ENCODE measurements at regions of chr5 and their contacts with region 1.

Region 1: DNA sequence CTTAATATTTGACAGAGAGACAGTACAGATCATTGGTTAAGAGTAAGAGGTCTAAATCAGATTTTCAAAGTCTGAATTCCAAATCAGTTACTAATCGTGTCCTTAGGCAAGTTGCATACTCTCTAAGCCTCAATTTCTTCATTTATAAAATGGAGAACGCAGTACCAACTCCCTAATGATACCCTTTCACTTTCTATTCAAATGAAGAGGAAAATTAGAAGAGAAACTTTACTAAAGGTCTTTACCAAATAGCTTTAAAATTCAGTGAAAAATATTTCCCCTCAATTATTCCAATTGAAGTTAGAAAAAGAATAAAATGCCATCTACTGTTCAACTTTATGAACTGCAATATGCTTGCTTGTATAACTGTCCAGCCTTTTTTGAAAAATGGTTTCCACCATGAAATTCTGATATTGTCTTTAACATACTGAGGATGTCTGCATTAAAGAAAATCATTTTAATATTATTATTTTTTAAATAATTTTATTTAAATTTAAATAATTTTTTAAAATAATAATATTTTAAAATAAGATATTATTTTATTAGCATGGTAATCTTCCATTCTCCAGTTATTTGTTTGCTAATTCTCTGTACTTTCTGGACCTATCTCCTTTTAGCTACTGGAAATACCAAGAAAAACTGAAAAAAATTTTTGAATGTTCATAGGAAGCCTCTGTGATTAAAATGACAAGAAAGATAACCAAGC is 36.0 kb downstream of the POC5 start:
- DNase-seq: no peak
- ATAC-seq: peak; percentile 45
- H3K4me3 Mint-ChIP-seq: no peak overlapping the region
- H3K27ac Mint-ChIP-seq: no peak overlapping the region
- H3K4me1 Mint-ChIP-seq: no peaks in the 10 kb centered on the region
- H3K27me3 Mint-ChIP-seq: no peaks in the 10 kb centered on the region
- CTCF ChIP-seq: peak; percentile 82

Region 2: GRCh38 chr5:75053304-75054133 is 627.8 kb before region 1 on chr5:
- CTCF ChIA-PET with region 1: interaction called, 8 read pairs
- POLR2A ChIA-PET with region 1: no interaction called
- intact Hi-C with region 1: loop called (anchors 2 kb)
- DNase-seq: no peak
- ATAC-seq: no peak
- H3K4me3 Mint-ChIP-seq: peak overlapping the region; percentile 73
- H3K27ac Mint-ChIP-seq: no peak overlapping the region
- H3K4me1 Mint-ChIP-seq: peaks cover 10% of the 10 kb centered on the region
- H3K27me3 Mint-ChIP-seq: peaks cover 53% of the 10 kb centered on the region
- CTCF ChIP-seq: no peak

Region 3: GRCh38 chr5:75389430-75389829 is 291.8 kb before region 1 on chr5:
- CTCF ChIA-PET with region 1: no interaction called
- POLR2A ChIA-PET with region 1: no interaction called
- intact Hi-C with region 1: loop called (anchors 10 kb)
- DNase-seq: no peak
- ATAC-seq: no peak
- H3K4me3 Mint-ChIP-seq: no peak overlapping the region
- H3K27ac Mint-ChIP-seq: no peak overlapping the region
- H3K4me1 Mint-ChIP-seq: no peaks in the 10 kb centered on the region
- H3K27me3 Mint-ChIP-seq: no peaks in the 10 kb centered on the region
- CTCF ChIP-seq: no peak

Region 4: GRCh38 chr5:75640395-75640794 is 40.9 kb before region 1 on chr5:
- CTCF ChIA-PET with region 1: no interaction called
- POLR2A ChIA-PET with region 1: no interaction called
- intact Hi-C with region 1: no loop called
- DNase-seq: no peak
- ATAC-seq: no peak
- H3K4me3 Mint-ChIP-seq: no peak overlapping the region
- H3K27ac Mint-ChIP-seq: no peak overlapping the region
- H3K4me1 Mint-ChIP-seq: no peaks in the 10 kb centered on the region
- H3K27me3 Mint-ChIP-seq: no peaks in the 10 kb centered on the region
- CTCF ChIP-seq: no peak

Region 5: GRCh38 chr5:76223696-76224095 is 542.4 kb after region 1 on chr5:
- CTCF ChIA-PET with region 1: no interaction called
- POLR2A ChIA-PET with region 1: no interaction called
- intact Hi-C with region 1: no loop called
- DNase-seq: no peak
- ATAC-seq: no peak
- H3K4me3 Mint-ChIP-seq: no peak overlapping the region
- H3K27ac Mint-ChIP-seq: no peak overlapping the region
- H3K4me1 Mint-ChIP-seq: no peaks in the 10 kb centered on the region
- H3K27me3 Mint-ChIP-seq: peaks cover 8% of the 10 kb centered on the region
- CTCF ChIP-seq: no peak

Region 6: GRCh38 chr5:76319673-76320072 is 638.4 kb after region 1 on chr5:
- CTCF ChIA-PET with region 1: no interaction called
- POLR2A ChIA-PET with region 1: no interaction called
- intact Hi-C with region 1: no loop called
- DNase-seq: no peak
- ATAC-seq: no peak
- H3K4me3 Mint-ChIP-seq: no peak overlapping the region
- H3K27ac Mint-ChIP-seq: no peak overlapping the region
- H3K4me1 Mint-ChIP-seq: no peaks in the 10 kb centered on the region
- H3K27me3 Mint-ChIP-seq: peaks cover 3% of the 10 kb centered on the region
- CTCF ChIP-seq: no peak

Measured in activated B cell treated with CpG ODN at 0.5 μM for 24 hours (primary cell).